Dorsolateral prefrontal cortex (tissue), 120 donors: ENCODE measurements at regions of chr16 and their contacts with region 1.

Region 1: GRCh38 chr16:4475880-4476788 is at the start of gene HMOX2:
- DNase-seq: peak; percentile 89 to 97 (median 94)
- H3K4me3 ChIP-seq: peak within 1 kb of the TSS; percentile 70 to 100 (median 98)
- H3K27ac ChIP-seq: peak within 1 kb of the TSS in 56 of 59 donors; percentile 21 to 94 (median 82)
- H3K27me3 ChIP-seq: no peaks in the 10 kb centered on the region
- CTCF ChIP-seq: peak in 50 of 56 donors; percentile 14 to 62 (median 46)
- total RNA-seq, gene HMOX2: 41.9 to 120 (median 90.5) TPM

Region 2: DNA sequence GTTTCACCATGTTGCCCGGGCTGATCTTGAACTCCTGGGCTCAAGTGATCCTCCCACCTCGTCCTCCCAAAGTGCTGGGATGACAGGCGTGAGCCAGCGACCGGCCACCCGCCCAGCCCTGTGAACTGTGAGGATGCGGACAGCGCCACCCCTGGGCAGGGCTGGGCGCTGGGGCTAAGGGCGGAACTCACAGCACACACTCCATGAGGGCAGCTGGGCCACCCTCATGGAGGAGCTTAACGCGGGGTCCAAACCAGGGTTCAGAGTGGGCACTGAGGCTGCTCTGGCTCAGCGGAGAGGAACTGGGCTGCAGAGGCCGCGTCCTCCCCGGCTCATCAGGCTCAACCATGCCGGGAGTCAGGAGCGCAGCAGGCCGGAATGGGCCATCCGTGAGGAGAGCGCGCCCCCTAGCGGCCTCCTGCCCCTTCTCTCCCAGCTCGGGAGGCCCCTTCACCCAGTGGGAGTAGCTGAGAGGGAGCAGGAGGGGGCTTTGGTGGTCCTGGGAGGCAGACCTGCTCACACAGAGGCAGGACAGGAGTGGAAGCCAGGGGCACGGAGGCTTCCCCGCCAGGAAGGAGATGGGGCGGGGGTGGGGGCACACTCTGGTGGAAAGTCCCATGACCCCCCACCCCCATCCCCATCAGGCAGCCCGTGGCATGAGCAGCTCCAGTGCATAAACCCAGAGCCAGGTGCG is 73.5 kb before region 1 on chr16:
- intact Hi-C with region 1: no loop called
- DNase-seq: peak; percentile 76 to 92 (median 85)
- H3K4me3 ChIP-seq: peak overlapping the region in 24 of 59 donors; percentile 6 to 44 (median 26)
- H3K27ac ChIP-seq: peak overlapping the region in 32 of 59 donors; percentile 3 to 86 (median 34)
- H3K27me3 ChIP-seq: no peaks in the 10 kb centered on the region
- CTCF ChIP-seq: peak; percentile 77 to 98 (median 93)

Region 3: DNA sequence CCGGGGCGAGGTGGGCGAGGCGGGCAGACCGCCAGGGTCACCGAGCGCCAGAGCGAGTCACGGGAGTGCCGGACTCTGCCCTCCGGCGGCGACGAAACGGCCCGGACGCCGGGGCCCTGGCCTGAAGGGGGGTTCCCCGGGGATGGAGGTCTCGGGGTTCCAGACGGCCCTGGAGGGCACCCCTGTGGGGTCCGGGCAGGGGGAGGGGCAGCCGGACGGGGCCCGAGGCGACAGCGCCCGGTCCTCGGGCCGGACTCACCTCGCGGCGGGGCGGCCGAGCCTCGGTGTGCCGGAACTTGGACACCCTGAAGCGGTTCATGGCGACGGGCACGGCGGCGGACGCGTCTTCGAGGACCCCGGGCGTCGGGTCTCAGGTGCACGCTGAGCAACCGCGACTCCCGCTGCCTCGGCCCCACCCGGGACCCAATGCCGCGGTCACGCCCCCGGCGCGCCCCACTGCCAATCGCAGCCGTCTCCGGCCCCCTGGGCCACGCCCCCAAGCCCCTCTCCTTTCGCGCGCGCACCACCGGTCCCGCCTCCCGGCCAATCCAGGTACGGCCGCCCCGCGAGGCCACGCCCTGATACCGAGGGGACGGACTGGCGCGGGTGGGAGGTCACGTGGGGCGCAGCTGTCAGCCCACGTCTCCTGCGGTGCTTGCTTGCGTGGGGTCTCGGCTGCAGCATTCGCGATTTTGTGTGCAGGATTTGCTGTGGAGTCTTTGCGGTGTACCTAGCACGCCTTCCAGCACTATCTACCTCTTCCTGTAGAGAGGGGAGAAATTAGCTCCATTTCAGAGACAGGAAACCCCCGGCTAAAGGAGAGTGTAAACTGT is 59.7 kb before region 1 on chr16 and contains the start of gene CORO7:
- intact Hi-C with region 1: loop called in 1 of 2 experiments (anchors 2 kb)
- DNase-seq: peak; percentile 95 to 99 (median 98)
- H3K4me3 ChIP-seq: peak within 1 kb of the TSS; percentile 73 to 99 (median 95)
- H3K27ac ChIP-seq: peak within 1 kb of the TSS; percentile 69 to 99 (median 93)
- H3K27me3 ChIP-seq: no peaks in the 10 kb centered on the region
- CTCF ChIP-seq: peak in 21 of 56 donors; percentile 8 to 40 (median 18)
- total RNA-seq, gene CORO7: 38.4 to 111 (median 63.7) TPM

Region 4: DNA sequence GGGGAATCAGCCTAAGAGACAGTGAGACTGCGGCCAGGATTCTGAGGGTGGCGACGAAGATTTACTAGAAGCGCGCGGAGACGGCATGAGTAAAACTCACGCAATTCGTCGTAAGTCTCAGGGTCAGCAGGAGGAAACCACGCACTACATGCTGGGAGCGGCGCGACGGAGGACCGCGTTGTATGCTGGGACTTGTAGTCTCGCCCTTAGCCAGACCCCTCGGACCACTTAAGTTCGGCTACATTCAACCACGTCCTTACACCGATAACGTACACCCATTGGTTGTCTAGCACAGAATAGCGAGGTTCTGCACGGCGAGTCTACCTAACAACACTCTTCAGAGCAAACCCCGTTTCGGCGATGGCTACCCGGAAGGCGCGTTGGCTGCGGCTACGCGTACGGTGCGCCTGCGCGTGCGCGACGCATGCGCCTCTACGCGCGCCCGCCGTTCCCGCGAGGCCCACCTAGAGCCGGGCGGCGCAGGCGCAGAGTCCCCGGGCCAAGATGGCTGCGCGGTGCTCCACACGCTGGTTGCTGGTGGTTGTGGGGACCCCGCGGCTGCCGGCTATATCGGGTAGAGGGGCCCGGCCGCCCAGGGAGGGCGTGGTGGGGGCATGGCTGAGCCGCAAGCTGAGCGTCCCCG is 50.6 kb before region 1 on chr16 and contains the start of gene DNAJA3:
- intact Hi-C with region 1: loop called in 1 of 2 experiments (anchors 5 kb)
- DNase-seq: peak; percentile 89 to 94 (median 92)
- H3K4me3 ChIP-seq: peak within 1 kb of the TSS; percentile 59 to 100 (median 96)
- H3K27ac ChIP-seq: peak within 1 kb of the TSS; percentile 90 to 100 (median 99)
- H3K27me3 ChIP-seq: no peaks in the 10 kb centered on the region
- CTCF ChIP-seq: peak in 23 of 56 donors; percentile 7 to 46 (median 24)
- total RNA-seq, gene DNAJA3: 38.3 to 66.6 (median 53.2) TPM

Region 5: GRCh38 chr16:4911831-4912417 is 435.8 kb after region 1 on chr16:
- intact Hi-C with region 1: no loop called
- DNase-seq: no peak
- H3K4me3 ChIP-seq: no peak overlapping the region
- H3K27ac ChIP-seq: no peak overlapping the region
- H3K27me3 ChIP-seq: no peaks in the 10 kb centered on the region
- CTCF ChIP-seq: no peak